MCF 10A (cell line): ENCODE measurements at regions of chr13 and their contacts with region 1.

Region 1: DNA sequence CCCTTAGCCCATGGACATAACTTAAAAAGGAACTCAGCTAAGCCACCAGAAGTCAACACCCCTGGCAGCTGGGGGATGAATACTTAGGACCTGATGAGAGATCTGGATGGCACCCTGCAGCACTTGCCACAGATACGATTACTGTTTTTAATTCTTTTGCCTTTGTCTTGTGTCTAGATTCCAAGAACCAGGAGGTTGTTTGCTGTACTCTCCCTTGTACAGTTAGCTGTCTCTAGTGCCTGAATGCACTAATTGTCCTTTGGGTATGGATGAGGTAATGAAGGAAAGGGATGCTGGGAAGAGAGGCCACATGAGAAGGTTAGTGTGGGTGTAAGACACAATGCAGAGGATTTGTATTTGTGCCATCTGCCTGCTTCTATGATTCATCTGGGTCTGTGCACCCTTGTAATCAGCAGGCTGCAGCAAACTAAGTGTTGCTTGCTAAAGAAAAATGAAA is 385.8 kb downstream of the KCNRG start:
- DNase-seq: peak; percentile 75
- H3K4me3 Mint-ChIP-seq: no peak overlapping the region
- H3K27ac Mint-ChIP-seq: peak overlapping the region; percentile 15
- H3K4me1 Mint-ChIP-seq: peaks cover 30% of the 10 kb centered on the region
- H3K27me3 Mint-ChIP-seq: no peaks in the 10 kb centered on the region
- CTCF ChIP-seq: no peak

Region 2: DNA sequence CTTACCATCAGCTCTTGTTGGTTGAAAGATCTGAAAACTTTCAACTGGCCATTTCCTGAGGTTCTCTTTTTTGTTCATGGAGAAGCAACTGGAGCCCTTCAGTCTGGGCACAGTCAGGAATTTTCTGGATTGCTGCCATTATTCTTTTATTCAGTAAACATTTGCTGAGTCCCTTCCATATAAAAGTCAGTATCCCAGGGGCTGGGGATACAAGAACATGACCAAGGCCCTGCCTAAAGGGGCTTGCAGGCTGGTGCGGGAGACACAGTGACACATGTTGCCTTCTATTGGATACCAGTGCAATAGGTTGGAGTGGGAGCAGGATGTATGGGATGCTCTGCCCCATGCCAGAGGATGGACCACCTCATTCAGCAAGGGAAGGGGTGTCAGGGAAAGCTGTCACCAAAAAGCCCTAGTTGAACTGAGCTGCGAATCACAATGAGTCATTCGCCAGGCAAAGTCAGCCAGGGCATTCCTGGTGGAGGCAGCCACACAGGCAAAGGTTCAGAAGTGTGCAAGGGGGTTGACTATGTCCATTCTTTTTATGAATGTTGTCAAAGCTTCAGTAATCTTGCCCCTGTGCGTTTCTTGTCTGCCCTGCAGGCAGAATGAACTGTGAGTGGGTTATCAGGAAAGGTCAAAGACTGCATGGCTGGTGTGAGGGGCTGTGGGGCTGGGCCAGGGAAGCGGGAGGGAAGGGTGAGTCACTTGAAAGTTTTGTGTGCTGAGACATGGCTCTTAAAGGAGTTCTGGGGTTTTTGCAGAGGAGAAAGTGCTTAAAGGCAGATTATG is 10.0 kb after region 1 on chr13:
- CTCF ChIA-PET with region 1: interaction called, 4 read pairs
- POLR2A ChIA-PET with region 1: interaction called, 23 read pairs
- intact Hi-C with region 1: no loop called
- DNase-seq: peak; percentile 80
- H3K4me3 Mint-ChIP-seq: peak overlapping the region; percentile 33
- H3K27ac Mint-ChIP-seq: peak overlapping the region; percentile 85
- H3K4me1 Mint-ChIP-seq: peaks cover 14% of the 10 kb centered on the region
- H3K27me3 Mint-ChIP-seq: no peaks in the 10 kb centered on the region
- CTCF ChIP-seq: no peak

Region 3: DNA sequence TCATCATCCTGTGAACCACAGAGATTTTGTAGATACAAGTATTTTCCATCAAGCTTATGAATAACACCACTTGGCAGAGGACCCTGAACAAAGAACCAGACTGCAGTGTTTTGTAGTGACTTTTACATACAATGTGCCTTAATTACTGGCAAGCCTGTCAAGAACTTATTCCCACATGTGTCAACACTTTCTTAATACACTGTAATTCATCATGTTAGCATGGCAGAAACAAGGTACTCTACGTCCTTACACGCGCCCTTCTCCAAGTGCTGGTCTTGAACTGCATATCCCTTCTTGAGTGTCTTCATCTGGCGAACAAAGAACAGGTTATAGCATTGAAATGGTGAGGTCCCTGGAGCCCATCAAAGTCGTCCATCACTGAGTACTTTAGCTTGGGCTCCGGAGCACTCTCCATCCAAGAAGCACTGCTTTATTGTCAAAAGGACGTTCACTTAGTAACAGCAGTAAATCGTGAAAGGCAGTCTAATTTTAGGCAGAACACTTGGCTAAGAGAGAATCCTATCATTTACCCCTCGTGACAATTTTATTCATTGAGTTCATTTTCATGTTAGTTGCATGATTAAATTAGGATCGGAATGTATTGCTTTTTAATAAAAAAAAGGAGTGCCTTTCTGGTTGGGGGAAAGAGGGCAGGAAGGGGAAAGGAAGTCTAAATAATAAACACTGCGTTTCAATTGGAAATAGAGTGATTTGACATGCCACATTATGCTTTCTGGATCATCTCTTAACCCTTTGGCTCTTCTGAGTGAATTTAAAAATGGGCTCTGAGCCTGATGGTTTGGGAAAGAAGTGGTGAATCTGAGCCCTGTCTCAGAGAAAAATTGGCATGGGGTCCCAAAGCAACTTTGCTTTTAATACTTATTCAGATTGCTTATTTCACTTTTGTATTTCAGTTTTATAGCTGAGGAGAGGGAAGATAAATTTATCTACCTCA is 66.4 kb after region 1 on chr13:
- CTCF ChIA-PET with region 1: no interaction called
- POLR2A ChIA-PET with region 1: no interaction called
- intact Hi-C with region 1: no loop called
- DNase-seq: no peak
- H3K4me3 Mint-ChIP-seq: no peak overlapping the region
- H3K27ac Mint-ChIP-seq: no peak overlapping the region
- H3K4me1 Mint-ChIP-seq: no peaks in the 10 kb centered on the region
- H3K27me3 Mint-ChIP-seq: no peaks in the 10 kb centered on the region
- CTCF ChIP-seq: no peak